Mammary epithelial cell (primary cell): ENCODE measurements at regions of chr3 and their contacts with region 1.

Region 1: DNA sequence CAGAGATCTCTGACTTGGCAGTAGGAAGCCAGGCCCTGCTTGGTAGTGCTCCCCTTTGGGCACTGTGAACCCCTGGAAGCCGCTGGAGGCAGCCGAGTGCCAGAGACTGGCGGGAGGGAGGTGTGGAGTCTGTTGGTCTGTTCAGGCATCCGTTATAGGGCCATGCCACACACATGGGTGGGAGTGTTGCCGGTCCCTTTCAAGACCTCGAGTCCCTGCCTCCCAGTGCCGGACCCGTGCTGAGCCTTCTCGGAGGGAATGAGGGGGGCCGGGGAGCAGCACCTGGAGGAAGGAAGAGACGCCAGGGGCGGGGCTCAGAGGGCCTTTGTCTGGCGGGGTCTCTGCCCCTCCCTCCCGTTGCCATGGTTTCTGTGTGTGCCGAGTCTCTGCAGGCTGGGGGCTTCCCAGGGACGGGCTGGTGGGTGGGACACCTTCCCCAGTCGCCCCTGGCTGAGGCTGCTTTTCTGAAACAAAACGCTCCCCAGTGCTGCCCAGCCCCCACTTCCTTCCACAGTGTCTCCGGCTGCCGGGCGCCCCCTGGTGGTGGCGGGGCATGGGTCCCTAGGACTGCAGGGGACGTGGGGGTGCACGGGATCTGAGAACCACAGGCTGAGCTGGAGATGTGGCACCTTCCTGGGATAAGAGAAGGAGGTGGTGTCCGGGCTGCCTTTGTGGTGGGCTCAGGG is 10.0 kb downstream of the GNAI2 start:
- DNase-seq: no peak
- H3K4me3 ChIP-seq: peak overlapping the region in 2 of 3 experiments; percentile 19 to 41
- H3K27ac ChIP-seq: peak overlapping the region; percentile 75
- H3K4me1 ChIP-seq: peaks cover 78% of the 10 kb centered on the region
- H3K27me3 ChIP-seq: no peaks in the 10 kb centered on the region
- CTCF ChIP-seq: peak; percentile 93 to 99

Region 2: GRCh38 chr3:50154840-50155474 is 91.0 kb before region 1 on chr3 and contains the start of gene SEMA3F:
- CTCF ChIA-PET with region 1: no interaction called
- dilution Hi-C with region 1: loop called (anchors 5 kb)
- in situ Hi-C with region 1: no loop called
- intact Hi-C with region 1: no loop called
- DNase-seq: peak; percentile 81
- H3K4me3 ChIP-seq: peak within 1 kb of the TSS; percentile 69 to 84 (median 71)
- H3K27ac ChIP-seq: peak within 1 kb of the TSS; percentile 67
- H3K4me1 ChIP-seq: peaks cover 70% of the 10 kb centered on the region
- H3K27me3 ChIP-seq: no peaks in the 10 kb centered on the region
- CTCF ChIP-seq: no peak
- total RNA-seq, gene SEMA3F: 102 to 129 TPM

Region 3: DNA sequence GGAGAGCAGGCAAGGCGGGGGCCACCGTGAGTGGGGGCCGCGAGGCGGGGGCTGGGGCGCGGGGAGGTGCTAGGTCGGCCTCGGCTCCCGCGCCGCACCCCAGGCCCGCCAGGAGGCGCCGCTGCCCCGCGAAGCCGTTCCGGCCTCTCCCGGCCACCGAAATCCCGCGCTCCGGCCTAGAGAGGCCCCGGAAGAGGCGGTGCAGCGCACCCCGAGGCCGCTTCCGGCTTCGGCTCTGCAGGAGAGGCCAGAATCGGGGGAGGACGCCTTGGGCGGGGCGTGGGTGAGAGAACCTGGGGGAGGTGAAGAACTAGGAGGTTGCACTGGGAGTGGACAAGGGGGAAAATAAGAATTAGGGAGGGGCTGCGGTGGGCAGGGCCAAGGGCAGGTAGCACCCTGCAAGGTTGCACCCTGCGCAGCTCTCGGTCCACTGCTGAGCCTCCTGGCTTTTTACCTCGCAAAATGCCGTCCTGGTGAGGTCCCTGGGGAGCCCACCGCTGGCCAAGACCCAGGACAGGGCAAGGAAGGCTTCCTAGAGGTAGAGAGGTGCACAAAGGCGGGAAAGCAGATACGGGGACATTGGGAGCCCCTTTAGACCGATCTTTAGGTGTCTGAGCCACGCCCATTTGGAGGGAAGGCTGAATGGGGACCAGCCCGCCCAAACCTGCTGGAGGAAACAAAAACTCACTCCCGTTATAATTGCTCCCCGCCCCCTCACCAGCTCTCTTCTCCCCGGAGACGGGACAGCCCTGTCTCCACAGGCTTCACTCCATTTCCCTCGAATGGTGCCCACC is 18.4 kb before region 1 on chr3:
- CTCF ChIA-PET with region 1: interaction called, 12 read pairs
- dilution Hi-C with region 1: no loop called
- in situ Hi-C with region 1: no loop called
- intact Hi-C with region 1: loop called (anchors 1 kb)
- DNase-seq: peak; percentile 96
- H3K4me3 ChIP-seq: peak overlapping the region; percentile 58 to 60 (median 59)
- H3K27ac ChIP-seq: peak overlapping the region; percentile 52
- H3K4me1 ChIP-seq: peaks cover 20% of the 10 kb centered on the region
- H3K27me3 ChIP-seq: no peaks in the 10 kb centered on the region
- CTCF ChIP-seq: peak; percentile 43 to 74

Region 4: DNA sequence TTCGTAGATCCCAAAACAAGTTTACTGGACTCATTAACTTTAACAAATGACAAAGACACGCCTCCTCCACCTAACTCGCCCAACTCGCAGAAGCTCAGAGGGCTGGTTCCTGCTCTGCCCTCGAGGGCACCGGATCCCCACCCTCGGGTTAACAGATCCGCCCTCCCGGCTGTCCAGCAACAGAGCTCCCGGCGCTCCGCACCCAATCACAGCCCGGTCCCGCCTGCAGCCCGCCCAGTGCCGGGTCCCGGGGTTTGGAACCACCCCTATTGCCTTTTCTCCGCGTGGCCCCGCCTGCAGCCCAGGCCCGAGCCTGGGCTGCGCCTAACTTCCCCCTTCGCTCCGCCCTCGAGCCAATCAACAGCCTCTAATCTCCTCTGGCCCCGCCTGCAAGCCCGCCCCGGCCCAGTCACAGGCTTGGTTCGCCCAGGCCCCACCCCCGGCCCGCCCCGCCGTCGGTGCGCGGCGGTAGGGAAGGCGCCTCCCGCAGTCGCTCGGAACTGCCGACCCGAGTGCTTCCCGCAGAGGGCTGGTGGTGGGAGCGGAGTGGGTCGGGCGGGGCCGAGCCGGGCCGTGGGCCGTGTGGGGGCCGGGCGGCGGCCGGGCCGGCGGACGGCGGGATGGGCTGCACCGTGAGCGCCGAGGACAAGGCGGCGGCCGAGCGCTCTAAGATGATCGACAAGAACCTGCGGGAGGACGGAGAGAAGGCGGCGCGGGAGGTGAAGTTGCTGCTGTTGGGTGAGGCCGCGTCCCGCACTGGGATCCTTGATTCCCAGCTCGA is 10.1 kb before region 1 on chr3 and contains the start of gene GNAI2:
- CTCF ChIA-PET with region 1: interaction called, 13 read pairs
- dilution Hi-C with region 1: no loop called
- in situ Hi-C with region 1: no loop called
- intact Hi-C with region 1: loop called (anchors 1 kb)
- DNase-seq: peak; percentile 99
- H3K4me3 ChIP-seq: peak within 1 kb of the TSS; percentile 72 to 80 (median 79)
- H3K27ac ChIP-seq: peak within 1 kb of the TSS; percentile 70
- H3K4me1 ChIP-seq: peaks cover 17% of the 10 kb centered on the region
- H3K27me3 ChIP-seq: no peaks in the 10 kb centered on the region
- CTCF ChIP-seq: no peak
- total RNA-seq, gene GNAI2: 176 to 235 TPM

Region 5: GRCh38 chr3:50260027-50260941 is 14.3 kb after region 1 on chr3:
- CTCF ChIA-PET with region 1: interaction called, 8 read pairs
- dilution Hi-C with region 1: no loop called
- in situ Hi-C with region 1: no loop called
- intact Hi-C with region 1: loop called (anchors 2 kb)
- DNase-seq: peak; percentile 86
- H3K4me3 ChIP-seq: peak overlapping the region; percentile 32 to 52 (median 41)
- H3K27ac ChIP-seq: peak overlapping the region; percentile 54
- H3K4me1 ChIP-seq: peaks cover 35% of the 10 kb centered on the region
- H3K27me3 ChIP-seq: no peaks in the 10 kb centered on the region
- CTCF ChIP-seq: peak; percentile 77 to 91

Region 6: DNA sequence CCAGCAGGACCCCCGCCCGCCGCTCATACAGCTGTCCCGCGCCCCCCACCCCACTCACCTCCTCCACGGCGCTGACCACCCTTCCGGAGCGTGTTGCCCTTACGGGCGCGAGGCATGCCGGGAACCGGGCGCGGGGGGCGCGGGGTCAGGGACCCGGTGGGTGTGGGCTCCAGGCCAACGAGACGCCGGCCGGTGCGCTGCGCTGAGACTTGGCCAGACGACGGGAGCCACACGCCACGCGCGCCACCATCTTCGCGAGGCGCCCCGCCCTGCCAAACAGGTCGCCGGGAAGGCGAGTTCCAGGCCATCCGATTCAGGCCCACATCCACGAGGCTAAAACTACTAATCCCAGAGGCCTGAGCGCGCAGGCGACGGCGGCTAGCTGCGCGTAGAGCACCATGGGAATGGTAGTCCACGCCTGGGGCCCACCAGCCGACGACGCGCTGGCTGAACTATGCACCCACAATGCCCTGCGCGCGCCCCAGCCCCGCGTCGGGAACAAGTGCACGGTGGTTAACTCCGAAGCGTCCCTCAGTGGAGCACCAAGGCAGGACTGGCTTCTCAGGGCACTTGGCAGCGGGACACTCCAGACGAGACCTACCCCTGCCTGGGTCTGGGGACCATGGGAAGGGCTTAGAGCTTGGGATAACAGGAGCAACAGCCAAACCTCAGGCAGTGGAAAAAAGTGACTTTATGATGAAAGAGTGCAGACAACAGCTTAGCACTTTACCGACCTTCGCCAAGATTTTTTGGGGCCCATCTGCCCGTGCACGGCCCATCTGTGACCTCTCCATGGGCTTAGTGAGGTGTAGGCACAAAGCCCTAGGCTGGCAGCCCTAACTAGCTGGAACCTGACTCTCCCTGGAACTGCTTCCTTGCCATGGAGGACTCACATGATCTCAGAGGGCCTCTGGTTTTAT is 46.4 kb after region 1 on chr3 and contains the start of gene IFRD2:
- CTCF ChIA-PET with region 1: no interaction called
- dilution Hi-C with region 1: no loop called
- in situ Hi-C with region 1: no loop called
- intact Hi-C with region 1: loop called (anchors 2 kb)
- DNase-seq: peak; percentile 97
- H3K4me3 ChIP-seq: peak within 1 kb of the TSS; percentile 59 to 70 (median 65)
- H3K27ac ChIP-seq: peak within 1 kb of the TSS; percentile 63
- H3K4me1 ChIP-seq: peaks cover 6% of the 10 kb centered on the region
- H3K27me3 ChIP-seq: no peaks in the 10 kb centered on the region
- CTCF ChIP-seq: peak in 1 of 2 donors; percentile 7
- total RNA-seq, gene IFRD2: 65.5 to 117 TPM

Region 7: GRCh38 chr3:50337191-50337841 is 91.3 kb after region 1 on chr3:
- CTCF ChIA-PET with region 1: interaction called, 4 read pairs
- dilution Hi-C with region 1: loop called (anchors 5 kb)
- in situ Hi-C with region 1: no loop called
- intact Hi-C with region 1: no loop called
- DNase-seq: peak; percentile 99
- H3K4me3 ChIP-seq: peak overlapping the region; percentile 71 to 87 (median 74)
- H3K27ac ChIP-seq: peak overlapping the region; percentile 88
- H3K4me1 ChIP-seq: peaks cover 36% of the 10 kb centered on the region
- H3K27me3 ChIP-seq: no peaks in the 10 kb centered on the region
- CTCF ChIP-seq: no peak

Region 8: DNA sequence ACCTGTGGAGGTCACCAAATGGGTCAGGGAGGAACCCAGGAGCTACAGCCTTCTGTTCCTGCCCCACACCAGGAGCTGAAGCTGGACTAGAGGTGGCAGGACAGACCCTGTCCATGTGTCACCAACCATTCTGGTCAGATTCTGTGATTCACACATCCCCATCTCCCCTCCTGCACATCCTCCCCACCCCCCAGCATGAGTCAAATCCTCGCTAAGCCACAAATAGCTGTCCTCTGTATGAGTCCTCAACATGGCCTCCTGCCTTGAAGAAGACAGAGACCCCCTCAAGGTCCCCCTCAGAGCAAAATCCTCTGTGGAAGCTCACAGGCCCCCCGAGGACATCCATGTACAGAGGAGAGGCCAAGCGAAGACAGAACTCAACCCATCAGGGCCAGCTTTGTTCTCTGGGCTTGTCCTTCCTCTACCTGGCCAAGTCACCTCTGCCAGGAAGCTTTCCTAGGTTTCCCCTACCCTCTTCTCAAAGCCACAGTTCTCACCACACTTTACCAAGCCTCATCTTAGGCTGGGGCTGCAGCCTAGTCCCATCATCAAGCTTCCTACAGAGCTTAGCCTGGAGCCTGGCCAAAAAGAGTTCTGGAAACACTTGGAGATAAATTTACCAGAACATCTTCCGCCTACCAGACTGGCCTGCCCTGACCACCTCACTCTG is 240.4 kb after region 1 on chr3:
- CTCF ChIA-PET with region 1: no interaction called
- dilution Hi-C with region 1: no loop called
- in situ Hi-C with region 1: no loop called
- intact Hi-C with region 1: no loop called
- DNase-seq: no peak
- H3K4me3 ChIP-seq: no peak overlapping the region
- H3K27ac ChIP-seq: no peak overlapping the region
- H3K4me1 ChIP-seq: no peaks in the 10 kb centered on the region
- H3K27me3 ChIP-seq: no peaks in the 10 kb centered on the region
- CTCF ChIP-seq: no peak